MCF 10A (cell line): ENCODE measurements at regions of chr12 and their contacts with region 1.

Region 1: GRCh38 chr12:50825372-50825838 is 17.3 kb upstream of the TMPRSS12 start:
- DNase-seq: peak; percentile 73
- H3K4me3 Mint-ChIP-seq: no peak overlapping the region
- H3K27ac Mint-ChIP-seq: peak overlapping the region; percentile 11
- H3K4me1 Mint-ChIP-seq: peaks cover 18% of the 10 kb centered on the region
- H3K27me3 Mint-ChIP-seq: no peaks in the 10 kb centered on the region
- CTCF ChIP-seq: peak; percentile 25

Region 2: DNA sequence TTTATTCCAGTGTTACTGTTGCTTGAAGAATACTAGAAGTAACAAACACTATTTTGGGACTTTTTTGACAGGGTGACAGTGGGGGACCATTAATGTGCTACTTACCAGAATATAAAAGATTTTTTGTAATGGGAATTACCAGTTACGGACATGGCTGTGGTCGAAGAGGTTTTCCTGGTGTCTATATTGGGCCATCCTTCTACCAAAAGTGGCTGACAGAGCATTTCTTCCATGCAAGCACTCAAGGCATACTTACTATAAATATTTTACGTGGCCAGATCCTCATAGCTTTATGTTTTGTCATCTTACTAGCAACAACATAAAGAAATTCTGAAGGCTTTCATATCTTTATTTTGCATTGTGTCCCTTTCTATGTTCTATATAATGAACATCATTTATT is 61.8 kb after region 1 on chr12:
- CTCF ChIA-PET with region 1: no interaction called
- POLR2A ChIA-PET with region 1: no interaction called
- intact Hi-C with region 1: no loop called
- DNase-seq: no peak
- H3K4me3 Mint-ChIP-seq: no peak overlapping the region
- H3K27ac Mint-ChIP-seq: no peak overlapping the region
- H3K4me1 Mint-ChIP-seq: no peaks in the 10 kb centered on the region
- H3K27me3 Mint-ChIP-seq: no peaks in the 10 kb centered on the region
- CTCF ChIP-seq: no peak

Region 3: DNA sequence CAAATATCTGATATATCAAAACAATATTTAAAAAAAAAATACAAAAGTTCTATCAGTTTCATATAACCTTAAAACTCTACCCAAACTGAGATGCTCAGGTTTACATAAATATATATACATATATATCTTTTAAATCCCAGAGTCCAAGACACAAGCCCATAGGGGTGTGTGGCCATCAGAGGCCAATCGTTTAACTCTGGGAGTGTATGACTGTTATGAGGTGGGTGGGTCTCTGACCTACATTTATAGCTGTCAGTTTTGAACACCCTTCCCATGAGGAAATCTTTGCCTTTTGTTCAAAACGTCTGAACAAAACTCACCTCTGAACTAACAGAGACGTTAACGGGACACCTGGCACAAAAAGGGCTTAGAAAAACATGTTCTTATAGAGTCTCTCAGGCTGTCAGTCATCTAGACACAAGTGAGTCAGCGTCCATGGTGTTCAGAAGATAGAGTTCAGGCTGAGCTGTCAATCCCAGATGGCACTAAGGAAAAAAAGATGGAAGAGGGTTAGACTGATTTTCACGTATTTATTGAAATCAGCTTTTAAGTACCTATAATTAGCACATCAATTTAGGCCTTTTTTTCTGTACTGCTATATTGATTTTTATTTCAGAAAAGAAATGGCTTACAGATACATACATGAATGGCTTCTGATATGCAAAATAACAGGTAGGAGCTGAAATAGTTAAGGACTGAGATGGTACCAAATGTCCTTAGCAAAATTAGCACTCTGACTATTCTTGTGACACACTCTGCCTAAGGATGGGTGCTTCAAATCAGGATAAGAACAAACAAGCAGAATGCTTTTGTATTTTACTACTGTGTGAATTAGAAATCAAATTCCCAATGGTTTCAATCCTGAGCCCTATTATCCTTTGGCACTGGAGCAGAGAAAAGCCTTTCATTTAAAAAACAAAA is 156.2 kb after region 1 on chr12:
- CTCF ChIA-PET with region 1: interaction called, 122 read pairs
- POLR2A ChIA-PET with region 1: interaction called, 34 read pairs
- intact Hi-C with region 1: no loop called
- DNase-seq: peak; percentile 40
- H3K4me3 Mint-ChIP-seq: no peak overlapping the region
- H3K27ac Mint-ChIP-seq: no peak overlapping the region
- H3K4me1 Mint-ChIP-seq: peaks cover 11% of the 10 kb centered on the region
- H3K27me3 Mint-ChIP-seq: no peaks in the 10 kb centered on the region
- CTCF ChIP-seq: no peak

Region 4: DNA sequence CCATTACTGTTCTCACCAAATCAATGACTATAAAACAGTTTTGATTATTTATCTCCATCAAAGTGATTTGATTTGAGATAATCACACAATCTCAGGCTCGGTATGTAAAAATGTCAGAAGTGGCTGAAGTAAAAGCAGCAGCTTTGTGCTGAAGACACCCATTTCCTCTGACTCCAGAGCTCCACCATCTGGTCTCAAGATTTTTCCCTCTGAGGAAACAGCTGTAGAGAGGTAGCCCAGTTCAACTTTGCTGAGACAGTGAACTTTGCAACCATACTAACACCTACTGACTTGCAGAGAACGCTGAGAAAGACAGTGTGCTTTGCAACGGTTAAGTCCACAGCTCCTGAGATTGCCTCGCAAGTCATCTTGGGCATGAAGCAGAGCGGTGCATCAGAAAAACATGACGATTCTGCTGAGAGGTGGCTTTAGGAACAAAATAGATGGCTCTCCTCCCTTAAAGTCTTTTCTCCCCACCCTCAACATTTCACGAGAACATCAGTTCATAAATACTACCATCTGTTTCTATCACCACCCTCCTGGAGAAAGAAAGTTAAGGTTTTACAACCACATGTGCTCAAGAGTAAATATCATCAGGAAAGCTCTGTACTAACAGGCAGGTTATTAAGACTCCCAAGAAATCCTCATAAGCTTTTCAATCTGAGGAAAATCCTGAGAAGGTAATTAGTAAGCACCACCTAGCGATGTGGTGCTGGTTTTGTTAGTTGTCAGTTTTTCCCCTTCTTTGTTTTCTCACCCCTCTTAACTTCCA is 161.7 kb after region 1 on chr12:
- CTCF ChIA-PET with region 1: interaction called, 122 read pairs
- POLR2A ChIA-PET with region 1: interaction called, 34 read pairs
- intact Hi-C with region 1: loop called (anchors 1 kb)
- DNase-seq: peak; percentile 67
- H3K4me3 Mint-ChIP-seq: no peak overlapping the region
- H3K27ac Mint-ChIP-seq: no peak overlapping the region
- H3K4me1 Mint-ChIP-seq: peaks cover 6% of the 10 kb centered on the region
- H3K27me3 Mint-ChIP-seq: no peaks in the 10 kb centered on the region
- CTCF ChIP-seq: peak; percentile 38